HEK293T (cell line): ENCODE measurements at regions of chr6 and their contacts with region 1.

Region 1: GRCh38 chr6:33276864-33277662 is at the start of gene B3GALT4:
- DNase-seq: peak; percentile 64

Region 2: GRCh38 chr6:32964776-32965175 is 312.3 kb before region 1 on chr6:
- CTCF ChIA-PET with region 1: no interaction called
- POLR2A ChIA-PET with region 1: no interaction called
- DNase-seq: no peak

Region 3: GRCh38 chr6:33208091-33208967 is 68.7 kb before region 1 on chr6 and contains the start of gene RING1:
- CTCF ChIA-PET with region 1: no interaction called
- POLR2A ChIA-PET with region 1: interaction called, 15 read pairs
- DNase-seq: peak; percentile 89

Region 4: GRCh38 chr6:33288921-33289748 is 12.1 kb after region 1 on chr6 and contains the starts of genes PFDN6 and WDR46:
- CTCF ChIA-PET with region 1: interaction called, 6 read pairs
- POLR2A ChIA-PET with region 1: interaction called, 37 read pairs
- DNase-seq: peak; percentile 86

Region 5: GRCh38 chr6:33299237-33299944 is 22.3 kb after region 1 on chr6:
- CTCF ChIA-PET with region 1: interaction called, 16 read pairs
- POLR2A ChIA-PET with region 1: interaction called, 36 read pairs
- DNase-seq: peak; percentile 86

Region 6: DNA sequence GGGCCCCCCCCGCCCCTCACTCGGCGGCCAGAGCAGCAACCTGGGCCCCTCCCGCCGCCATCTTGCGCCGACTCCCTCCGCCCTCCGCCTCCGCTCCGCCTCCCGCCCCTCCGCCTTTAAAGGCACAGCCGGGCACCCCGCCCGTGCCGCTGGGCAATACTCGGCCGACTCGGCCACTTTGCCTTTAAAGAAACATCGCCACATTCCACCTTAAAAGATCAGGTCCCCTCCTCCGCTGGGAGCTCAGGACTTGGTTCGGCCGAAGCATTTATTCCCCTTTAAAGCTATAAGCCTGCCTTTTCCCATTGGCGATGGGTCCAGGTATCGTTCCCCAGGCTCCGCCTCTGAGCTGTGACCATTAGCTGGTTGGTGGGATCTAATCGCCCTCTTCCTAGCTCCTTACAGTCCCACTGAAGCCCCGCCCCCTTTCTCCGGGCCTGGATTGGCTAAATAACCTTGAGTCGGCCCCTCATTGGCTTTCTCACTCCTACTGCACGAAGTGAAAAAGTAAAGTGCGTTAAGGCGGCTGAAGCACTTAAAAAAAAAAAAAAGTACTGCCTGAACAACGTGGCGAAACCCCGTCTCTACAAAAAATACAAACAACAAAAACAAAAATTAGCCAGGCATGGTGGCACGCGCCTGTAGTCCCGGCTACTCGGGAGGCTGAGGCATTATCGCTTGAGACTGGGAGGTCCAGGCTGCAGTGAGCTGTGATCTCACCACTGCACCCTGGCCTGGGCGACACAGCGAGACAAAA is 40.8 kb after region 1 on chr6 and contains the start of gene ZBTB22:
- CTCF ChIA-PET with region 1: no interaction called
- POLR2A ChIA-PET with region 1: interaction called, 17 read pairs
- DNase-seq: peak; percentile 87